Mammary epithelial cell (primary cell): ENCODE measurements at regions of chr7 and their contacts with region 1.

Region 1: DNA sequence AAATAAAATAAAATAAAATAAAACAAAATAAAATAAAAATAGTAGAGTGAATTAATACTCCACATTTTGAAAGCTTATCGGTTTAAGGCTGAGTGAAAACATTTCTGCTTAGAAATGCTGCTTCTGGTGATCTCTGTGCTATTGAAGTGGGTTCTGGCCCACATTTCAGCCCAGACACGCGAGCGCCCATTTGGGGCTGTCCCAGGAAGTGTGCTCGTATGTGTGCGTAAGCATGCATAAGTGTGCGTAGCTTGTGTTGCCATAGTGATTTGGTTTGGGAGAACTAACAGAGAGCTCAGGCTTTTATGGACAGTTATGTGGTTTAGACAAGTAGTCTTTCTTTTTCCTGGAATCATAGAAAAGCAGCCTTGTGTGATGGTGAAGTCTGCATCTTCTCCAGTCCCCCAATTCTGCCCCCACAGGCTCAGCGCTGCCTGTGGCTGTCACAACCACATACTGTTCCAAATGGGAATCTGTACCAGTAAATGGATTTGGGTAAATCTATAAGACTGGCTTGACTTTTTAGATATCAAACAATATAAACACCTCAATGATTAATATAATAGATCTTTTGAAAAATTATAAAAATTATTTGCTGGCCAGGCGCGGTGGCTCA is 29.8 kb upstream of the PURB start:
- DNase-seq: no peak
- H3K4me3 ChIP-seq: no peak overlapping the region
- H3K27ac ChIP-seq: no peak overlapping the region
- H3K4me1 ChIP-seq: peaks cover 11% of the 10 kb centered on the region
- H3K27me3 ChIP-seq: peaks cover 2% of the 10 kb centered on the region
- CTCF ChIP-seq: no peak

Region 2: GRCh38 chr7:44460325-44460724 is 454.8 kb before region 1 on chr7:
- CTCF ChIA-PET with region 1: no interaction called
- dilution Hi-C with region 1: no loop called
- in situ Hi-C with region 1: no loop called
- intact Hi-C with region 1: no loop called
- DNase-seq: peak; percentile 30
- H3K4me3 ChIP-seq: no peak overlapping the region
- H3K27ac ChIP-seq: no peak overlapping the region
- H3K4me1 ChIP-seq: peaks cover 20% of the 10 kb centered on the region
- H3K27me3 ChIP-seq: no peaks in the 10 kb centered on the region
- CTCF ChIP-seq: no peak

Region 3: DNA sequence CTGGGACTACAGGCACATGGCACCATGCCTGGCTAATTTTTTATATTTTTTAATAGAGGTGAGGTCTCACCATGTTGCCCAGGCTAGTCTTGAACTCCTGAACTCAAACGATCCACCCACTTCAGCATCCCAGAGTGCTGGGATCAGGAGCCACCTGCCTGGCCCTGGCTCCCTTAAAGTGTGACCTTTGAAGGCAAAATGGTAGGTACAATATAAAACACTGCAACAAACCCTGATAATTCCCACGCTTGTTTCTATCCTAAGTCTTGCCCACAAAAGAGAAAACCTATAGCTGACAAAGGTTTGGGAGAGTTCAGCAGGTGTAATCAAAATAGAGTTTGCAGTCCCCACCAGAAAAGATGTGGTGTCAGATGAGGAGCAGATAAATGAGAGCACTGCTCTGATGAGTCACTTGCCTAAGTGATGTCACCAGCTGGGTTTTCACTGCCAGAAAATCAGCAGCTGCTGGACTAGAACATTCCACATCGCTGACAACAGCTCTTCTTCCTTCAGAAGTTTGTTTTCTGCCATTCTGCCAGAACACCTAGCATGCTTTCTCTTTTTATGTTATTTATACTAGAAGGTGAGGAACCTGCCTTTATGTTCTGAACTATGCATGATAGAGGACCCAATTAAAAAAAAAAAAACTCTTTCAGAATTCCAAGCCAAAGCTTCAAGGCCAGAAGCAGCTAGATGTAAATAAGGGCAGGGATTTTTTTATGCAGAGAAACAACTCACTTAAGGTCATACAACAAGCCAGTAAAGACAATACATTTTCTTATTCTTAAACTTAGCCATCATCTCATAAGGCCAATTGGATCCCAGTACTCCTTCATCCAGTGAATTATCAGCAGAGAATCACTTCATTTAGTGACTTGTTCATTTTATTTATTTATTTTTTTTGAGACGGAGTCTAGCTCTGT is 47.8 kb before region 1 on chr7:
- CTCF ChIA-PET with region 1: no interaction called
- dilution Hi-C with region 1: no loop called
- in situ Hi-C with region 1: loop called in 1 of 2 experiments (anchors 10 kb)
- intact Hi-C with region 1: no loop called
- DNase-seq: peak; percentile 75
- H3K4me3 ChIP-seq: no peak overlapping the region
- H3K27ac ChIP-seq: no peak overlapping the region
- H3K4me1 ChIP-seq: peaks cover 8% of the 10 kb centered on the region
- H3K27me3 ChIP-seq: no peaks in the 10 kb centered on the region
- CTCF ChIP-seq: no peak